Prostate gland (tissue), 2 donors: ENCODE measurements at regions of chr5 and their contacts with region 1.

Region 1: DNA sequence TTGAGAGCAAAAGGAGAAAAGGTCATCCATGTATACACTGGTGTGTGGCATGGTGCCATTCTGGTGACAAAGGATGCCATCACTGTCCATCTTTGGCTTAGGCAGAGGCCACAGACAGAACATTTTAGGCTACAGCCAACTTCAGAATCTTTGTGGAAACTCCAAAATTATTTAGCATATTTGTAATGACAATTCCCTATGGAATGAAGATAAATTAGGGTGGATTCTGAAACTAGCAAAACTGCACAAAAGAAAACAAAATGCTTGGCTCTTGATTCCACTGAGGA is 92.5 kb downstream of the FBXW11 start:
- DNase-seq: no peak
- H3K4me3 ChIP-seq: no peak overlapping the region
- H3K27ac ChIP-seq: no peak overlapping the region
- H3K4me1 ChIP-seq: peaks cover 5% of the 10 kb centered on the region
- H3K27me3 ChIP-seq: no peaks in the 10 kb centered on the region
- CTCF ChIP-seq: no peak
- POLR2A ChIP-seq: no peak

Region 2: GRCh38 chr5:172006321-172007174 is 92.6 kb after region 1 on chr5 and contains the start of gene FBXW11:
- intact Hi-C with region 1: loop called (anchors 5 kb)
- DNase-seq: peak; percentile 97
- H3K4me3 ChIP-seq: peak within 1 kb of the TSS; percentile 94 to 96
- H3K27ac ChIP-seq: peak within 1 kb of the TSS; percentile 97 to 98
- H3K4me1 ChIP-seq: peaks cover 16% of the 10 kb centered on the region
- H3K27me3 ChIP-seq: no peaks in the 10 kb centered on the region
- CTCF ChIP-seq: peak in 1 of 4 experiments; percentile 22
- POLR2A ChIP-seq: peak; percentile 82
- total RNA-seq, gene FBXW11: 54.7 to 61.4 TPM

Region 3: GRCh38 chr5:172035039-172035438 is 121.1 kb after region 1 on chr5:
- intact Hi-C with region 1: loop called (anchors 2 kb)
- DNase-seq: no peak
- H3K4me3 ChIP-seq: no peak overlapping the region
- H3K27ac ChIP-seq: no peak overlapping the region
- H3K4me1 ChIP-seq: no peaks in the 10 kb centered on the region
- H3K27me3 ChIP-seq: no peaks in the 10 kb centered on the region
- CTCF ChIP-seq: no peak
- POLR2A ChIP-seq: no peak

Region 4: DNA sequence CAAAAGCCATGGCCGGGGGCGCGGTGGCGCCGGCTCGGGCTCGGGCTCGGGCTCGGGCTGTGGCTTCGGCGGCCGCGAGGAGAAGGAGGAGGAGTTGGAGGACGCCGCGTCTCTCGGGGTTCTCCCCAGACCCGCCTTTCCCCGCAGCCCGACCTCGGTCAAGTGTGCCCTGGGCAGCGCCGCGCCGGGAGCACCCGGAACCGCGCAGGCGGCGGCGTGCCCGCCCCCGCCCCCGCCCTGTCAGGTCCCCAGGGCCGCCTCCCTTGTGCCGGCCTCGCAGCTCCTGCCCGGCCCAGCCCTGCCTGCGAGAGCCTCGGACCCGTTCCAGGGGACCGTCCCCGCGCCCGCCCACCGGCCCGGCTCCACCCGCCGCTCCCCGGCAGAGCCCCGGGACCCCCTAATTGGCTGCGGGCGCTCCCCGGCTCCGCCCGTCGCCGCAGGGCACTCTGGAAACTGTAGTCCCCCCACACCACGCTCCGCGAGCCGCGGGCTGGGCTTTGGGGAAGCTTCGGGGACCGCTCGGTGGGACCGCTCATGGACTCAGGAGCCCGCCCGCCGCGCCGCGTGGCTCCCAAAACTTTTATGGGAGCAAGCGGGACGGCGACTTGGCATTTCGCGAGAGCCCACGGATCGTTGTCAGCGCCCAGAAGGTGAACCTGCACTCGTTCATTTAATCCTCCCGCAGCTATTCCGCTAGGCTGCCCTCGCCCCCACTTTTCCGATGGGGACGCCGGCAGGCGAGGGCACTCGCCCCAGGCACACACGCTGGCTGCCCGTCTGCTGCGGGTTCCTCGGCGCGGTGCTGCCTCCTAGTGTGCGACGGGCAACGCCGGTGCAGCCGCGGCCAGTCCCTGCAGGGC is 274.3 kb after region 1 on chr5 and contains the start of gene STK10:
- intact Hi-C with region 1: loop called (anchors 5 kb)
- DNase-seq: peak; percentile 87
- H3K4me3 ChIP-seq: peak within 1 kb of the TSS; percentile 70 to 86
- H3K27ac ChIP-seq: peak within 1 kb of the TSS; percentile 73 to 84
- H3K4me1 ChIP-seq: no peaks in the 10 kb centered on the region
- H3K27me3 ChIP-seq: no peaks in the 10 kb centered on the region
- CTCF ChIP-seq: peak; percentile 48 to 93 (median 79)
- POLR2A ChIP-seq: peak; percentile 61
- total RNA-seq, gene STK10: 4.6 to 73.3 TPM

Region 5: DNA sequence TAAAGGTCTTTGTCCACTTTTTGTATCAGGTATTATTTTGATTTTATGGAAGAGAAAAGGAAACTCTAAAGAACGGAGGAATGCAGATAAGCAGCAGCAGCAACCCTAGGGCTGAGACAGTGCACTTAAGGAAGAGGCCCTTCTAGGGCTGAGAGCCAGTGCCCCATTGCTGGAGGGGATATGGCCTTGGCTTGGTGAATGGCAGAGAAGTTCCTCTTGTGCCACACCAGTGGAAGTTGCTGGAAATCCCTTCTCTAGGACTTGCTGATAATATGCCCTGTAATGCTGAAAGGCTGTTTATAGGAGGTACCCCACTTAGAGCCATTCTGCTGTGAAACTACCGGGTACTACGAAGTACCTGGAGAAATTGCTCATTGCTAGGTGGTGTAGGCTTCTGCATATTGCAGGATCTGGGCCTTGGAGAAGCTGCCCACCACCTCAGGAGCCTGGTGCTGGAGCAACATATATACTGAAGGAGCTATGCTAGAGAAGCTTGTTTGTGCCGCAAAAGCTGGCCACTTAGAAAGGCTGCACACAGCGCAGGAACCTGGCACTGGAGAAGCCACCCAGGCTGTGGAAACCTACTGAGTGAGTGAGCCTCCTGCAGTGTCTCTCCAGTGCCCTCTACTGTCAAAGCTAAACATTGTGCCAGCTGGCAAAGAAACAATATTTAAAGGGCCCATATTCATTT is 379.3 kb after region 1 on chr5:
- intact Hi-C with region 1: loop called (anchors 10 kb)
- DNase-seq: peak; percentile 51
- H3K4me3 ChIP-seq: no peak overlapping the region
- H3K27ac ChIP-seq: no peak overlapping the region
- H3K4me1 ChIP-seq: no peaks in the 10 kb centered on the region
- H3K27me3 ChIP-seq: no peaks in the 10 kb centered on the region
- CTCF ChIP-seq: peak; percentile 43 to 79 (median 72)
- POLR2A ChIP-seq: no peak